CD4-positive, alpha-beta memory T cell (primary cell): ENCODE measurements at regions of chr3 and their contacts with region 1.

Region 1: DNA sequence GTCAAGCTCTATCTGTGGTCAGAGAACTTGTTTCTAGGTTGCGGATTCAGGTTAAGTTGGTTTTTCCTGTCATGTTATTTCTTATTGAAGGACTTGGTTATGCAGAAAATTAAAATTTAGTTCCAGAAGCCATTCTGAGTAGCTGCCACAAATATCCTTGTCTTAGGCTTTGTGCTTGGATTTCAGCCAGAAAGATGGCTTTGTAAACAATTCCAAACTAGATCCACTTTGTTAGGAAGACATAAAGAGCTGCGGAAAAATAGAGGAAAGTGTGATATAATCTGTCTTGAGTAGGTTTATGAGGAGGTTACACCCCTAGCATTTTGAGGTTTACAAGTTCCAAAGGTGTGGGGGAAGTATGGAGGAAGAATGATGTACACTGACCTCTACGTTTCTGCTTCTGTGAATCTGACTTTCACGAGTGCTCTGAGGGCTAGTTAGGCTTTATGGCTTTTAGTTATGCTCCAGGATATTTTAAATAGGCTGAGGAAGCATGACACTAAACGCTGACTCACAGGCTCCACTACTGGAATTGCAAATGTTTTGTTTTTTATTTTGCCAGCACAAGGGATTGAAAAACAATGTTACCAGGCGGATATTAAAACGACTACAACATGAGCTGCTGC is 46.3 kb upstream of the UTS2B start:
- DNase-seq: no peak
- H3K4me3 ChIP-seq: no peak overlapping the region
- H3K4me3 Mint-ChIP-seq: no peak overlapping the region
- H3K27ac ChIP-seq: no peak overlapping the region
- H3K27ac Mint-ChIP-seq: no peak overlapping the region
- H3K4me1 ChIP-seq: no peaks in the 10 kb centered on the region
- H3K4me1 Mint-ChIP-seq: peaks cover 0 to 14% (median 6%) of the 10 kb centered on the region in 4 donors
- H3K27me3 ChIP-seq: no peaks in the 10 kb centered on the region
- H3K27me3 Mint-ChIP-seq: no peaks in the 10 kb centered on the region

Region 2: GRCh38 chr3:191253089-191253799 is 123.4 kb before region 1 on chr3:
- CTCF ChIA-PET with region 1: no interaction called
- POLR2A ChIA-PET with region 1: no interaction called
- intact Hi-C with region 1: loop called (anchors 10 kb)
- DNase-seq: no peak
- H3K4me3 ChIP-seq: no peak overlapping the region
- H3K4me3 Mint-ChIP-seq: no peak overlapping the region
- H3K27ac ChIP-seq: no peak overlapping the region
- H3K27ac Mint-ChIP-seq: no peak overlapping the region
- H3K4me1 ChIP-seq: no peaks in the 10 kb centered on the region
- H3K4me1 Mint-ChIP-seq: no peaks in the 10 kb centered on the region
- H3K27me3 ChIP-seq: no peaks in the 10 kb centered on the region
- H3K27me3 Mint-ChIP-seq: no peaks in the 10 kb centered on the region

Region 3: GRCh38 chr3:191528589-191528988 is 152.0 kb after region 1 on chr3:
- CTCF ChIA-PET with region 1: no interaction called
- POLR2A ChIA-PET with region 1: no interaction called
- intact Hi-C with region 1: no loop called
- DNase-seq: no peak
- H3K4me3 ChIP-seq: no peak overlapping the region
- H3K4me3 Mint-ChIP-seq: no peak overlapping the region
- H3K27ac ChIP-seq: no peak overlapping the region
- H3K27ac Mint-ChIP-seq: no peak overlapping the region
- H3K4me1 ChIP-seq: no peaks in the 10 kb centered on the region
- H3K4me1 Mint-ChIP-seq: no peaks in the 10 kb centered on the region
- H3K27me3 ChIP-seq: no peaks in the 10 kb centered on the region
- H3K27me3 Mint-ChIP-seq: no peaks in the 10 kb centered on the region

Region 4: GRCh38 chr3:191869738-191870415 is 493.2 kb after region 1 on chr3:
- CTCF ChIA-PET with region 1: no interaction called
- POLR2A ChIA-PET with region 1: no interaction called
- intact Hi-C with region 1: no loop called
- DNase-seq: no peak
- H3K4me3 ChIP-seq: no peak overlapping the region
- H3K4me3 Mint-ChIP-seq: no peak overlapping the region
- H3K27ac ChIP-seq: no peak overlapping the region
- H3K27ac Mint-ChIP-seq: no peak overlapping the region
- H3K4me1 ChIP-seq: no peaks in the 10 kb centered on the region
- H3K4me1 Mint-ChIP-seq: no peaks in the 10 kb centered on the region
- H3K27me3 ChIP-seq: no peaks in the 10 kb centered on the region
- H3K27me3 Mint-ChIP-seq: no peaks in the 10 kb centered on the region